ENCODE measurements at regions of chr10 and their contacts with region 1.

Region 1: DNA sequence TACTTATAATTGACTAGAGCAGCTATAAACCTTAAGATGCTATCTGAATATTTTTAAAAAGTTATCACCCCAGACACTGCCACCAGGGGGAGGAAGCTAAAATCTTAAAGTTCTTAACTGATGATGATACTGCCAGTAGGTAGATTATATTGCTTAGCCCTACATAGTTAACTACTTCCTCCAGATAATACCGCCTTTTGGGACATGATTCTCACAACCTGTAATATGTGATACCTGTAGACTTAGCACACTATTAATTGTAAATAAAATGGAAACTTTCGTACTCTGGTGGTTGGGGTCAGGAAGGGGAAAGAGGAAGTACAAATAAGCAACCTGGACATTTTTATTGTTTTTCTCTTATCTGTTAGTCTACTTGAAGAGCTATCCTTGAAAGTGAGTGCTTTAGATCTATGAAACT is 268.9 kb downstream of the ADK start:
- DNase-seq: no peak
- H3K4me3 ChIP-seq: no peak overlapping the region
- H3K27ac ChIP-seq: no peak overlapping the region
- H3K4me1 ChIP-seq: peaks cover 0 to 6% (median 0%) of the 10 kb centered on the region in 4 donors
- H3K27me3 ChIP-seq: no peaks in the 10 kb centered on the region
- CTCF ChIP-seq: peak; percentile 45 to 51 (median 50)
- EP300 ChIP-seq: no peak
- POLR2A ChIP-seq: no peak

Region 2: GRCh38 chr10:75029857-75030256 is 609.9 kb after region 1 on chr10:
- intact Hi-C with region 1: loop called (anchors 10 kb)
- DNase-seq: no peak
- H3K4me3 ChIP-seq: no peak overlapping the region
- H3K27ac ChIP-seq: no peak overlapping the region
- H3K4me1 ChIP-seq: peaks cover 0 to 15% (median 11%) of the 10 kb centered on the region in 4 donors
- H3K27me3 ChIP-seq: no peaks in the 10 kb centered on the region
- CTCF ChIP-seq: no peak
- EP300 ChIP-seq: no peak
- POLR2A ChIP-seq: no peak